ENCODE measurements at regions of chr15 and their contacts with region 1.

Region 1: DNA sequence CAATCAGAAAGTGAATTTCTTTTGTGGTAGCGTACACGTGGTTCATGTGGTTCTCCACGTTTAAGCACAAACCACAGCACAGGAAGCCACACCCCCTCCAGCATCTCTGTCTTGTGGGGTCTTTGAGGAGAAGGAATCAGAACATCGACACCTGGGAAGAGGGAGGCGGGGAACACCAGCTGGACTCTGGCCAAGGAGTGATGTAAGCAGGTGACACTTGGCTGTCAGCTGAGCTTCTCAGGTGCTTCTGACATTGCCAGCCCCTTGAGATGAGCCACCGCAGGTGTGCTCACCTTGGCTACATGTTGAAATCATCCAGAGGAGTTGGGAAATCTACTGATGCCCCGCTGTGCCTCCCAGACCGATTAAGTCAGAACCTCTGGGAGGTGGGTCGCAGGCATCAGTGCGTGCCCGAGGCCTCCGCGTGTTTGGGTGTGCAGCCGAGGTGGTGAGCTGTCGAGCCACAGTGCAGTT is 85.0 kb downstream of the FAM81A start:
- DNase-seq: peak; percentile 25 to 88 (median 74)
- ATAC-seq: peak; percentile 84
- H3K4me3 ChIP-seq: peak overlapping the region in 1 of 2 experiments; percentile 26
- H3K4me3 Mint-ChIP-seq: peak overlapping the region; percentile 63
- H3K27ac ChIP-seq: no peak overlapping the region
- H3K27ac Mint-ChIP-seq: peak overlapping the region; percentile 82
- H3K4me1 ChIP-seq: peaks cover 34% of the 10 kb centered on the region
- H3K4me1 Mint-ChIP-seq: peaks cover 43% of the 10 kb centered on the region
- H3K27me3 ChIP-seq: peaks cover 0 to 3% of the 10 kb centered on the region in 2 experiments
- H3K27me3 Mint-ChIP-seq: no peaks in the 10 kb centered on the region
- CTCF ChIP-seq: no peak

Region 2: DNA sequence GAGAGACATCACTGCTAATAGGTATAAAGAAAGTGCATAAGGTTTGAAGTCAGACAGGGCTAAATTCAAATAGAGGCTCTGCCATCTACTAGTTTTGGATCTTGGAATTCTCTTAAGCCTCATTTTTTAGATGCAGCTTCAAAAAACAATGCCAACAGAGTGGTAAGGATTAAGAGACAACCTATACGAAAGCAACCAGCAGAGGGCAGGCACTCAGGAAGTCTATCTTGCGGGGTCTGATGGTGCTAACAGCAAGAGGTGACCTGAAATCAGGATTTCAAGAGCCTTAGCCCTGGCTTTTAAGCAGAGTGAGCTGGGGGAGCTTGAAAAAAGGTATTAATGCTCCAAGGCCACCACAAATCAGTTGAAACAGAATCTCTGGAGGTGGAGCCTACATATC is 275.7 kb before region 1 on chr15:
- CTCF ChIA-PET with region 1: interaction called, 12 read pairs
- POLR2A ChIA-PET with region 1: no interaction called
- intact Hi-C with region 1: no loop called
- DNase-seq: peak; percentile 20 to 76 (median 55)
- ATAC-seq: peak; percentile 68
- H3K4me3 ChIP-seq: no peak overlapping the region
- H3K4me3 Mint-ChIP-seq: no peak overlapping the region
- H3K27ac ChIP-seq: no peak overlapping the region
- H3K27ac Mint-ChIP-seq: no peak overlapping the region
- H3K4me1 ChIP-seq: no peaks in the 10 kb centered on the region
- H3K4me1 Mint-ChIP-seq: peaks cover 3% of the 10 kb centered on the region
- H3K27me3 ChIP-seq: no peaks in the 10 kb centered on the region
- H3K27me3 Mint-ChIP-seq: no peaks in the 10 kb centered on the region
- CTCF ChIP-seq: peak; percentile 48

Measured in CD8-positive, alpha-beta T cell (primary cell).